Head of caudate nucleus (tissue), 42 donors: ENCODE measurements at regions of chr4 and their contacts with region 1.

Region 1: GRCh38 chr4:52019936-52020657 is at the start of gene LRRC66:
- DNase-seq: no peak

Region 2: DNA sequence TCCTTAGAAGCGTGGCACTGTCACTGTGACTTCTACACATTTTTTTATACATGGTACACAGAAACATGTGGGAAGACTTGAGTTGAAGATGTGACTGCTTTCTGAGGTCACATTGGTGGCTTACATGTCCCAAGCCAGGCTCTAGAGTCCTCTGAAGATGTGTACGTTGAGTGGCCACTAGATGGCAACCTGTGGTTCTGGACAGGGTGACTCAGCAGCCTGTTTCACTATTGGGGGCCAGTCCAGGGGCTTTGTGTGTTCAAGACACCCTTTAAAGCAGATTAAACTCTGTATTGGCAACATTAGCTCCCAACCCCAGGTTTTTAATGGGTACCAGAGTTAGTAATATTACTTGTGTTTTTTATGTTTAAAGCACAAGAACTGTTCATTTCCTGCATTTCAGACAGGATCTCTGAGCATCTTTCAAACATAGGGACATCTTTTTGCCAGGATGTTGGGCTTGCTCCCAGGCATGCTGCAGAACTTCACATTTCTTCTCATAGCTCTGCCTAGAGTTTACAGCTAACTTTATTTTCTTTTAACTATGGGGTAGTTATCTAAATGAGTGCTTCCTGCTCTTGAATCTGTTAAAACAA is 124.2 kb before region 1 on chr4:
- intact Hi-C with region 1: loop called (anchors 5 kb)
- DNase-seq: peak; percentile 24 to 89 (median 71)